Naive thymus-derived CD8-positive, alpha-beta T cell (primary cell): ENCODE measurements at regions of chrX and their contacts with region 1.

Region 1: DNA sequence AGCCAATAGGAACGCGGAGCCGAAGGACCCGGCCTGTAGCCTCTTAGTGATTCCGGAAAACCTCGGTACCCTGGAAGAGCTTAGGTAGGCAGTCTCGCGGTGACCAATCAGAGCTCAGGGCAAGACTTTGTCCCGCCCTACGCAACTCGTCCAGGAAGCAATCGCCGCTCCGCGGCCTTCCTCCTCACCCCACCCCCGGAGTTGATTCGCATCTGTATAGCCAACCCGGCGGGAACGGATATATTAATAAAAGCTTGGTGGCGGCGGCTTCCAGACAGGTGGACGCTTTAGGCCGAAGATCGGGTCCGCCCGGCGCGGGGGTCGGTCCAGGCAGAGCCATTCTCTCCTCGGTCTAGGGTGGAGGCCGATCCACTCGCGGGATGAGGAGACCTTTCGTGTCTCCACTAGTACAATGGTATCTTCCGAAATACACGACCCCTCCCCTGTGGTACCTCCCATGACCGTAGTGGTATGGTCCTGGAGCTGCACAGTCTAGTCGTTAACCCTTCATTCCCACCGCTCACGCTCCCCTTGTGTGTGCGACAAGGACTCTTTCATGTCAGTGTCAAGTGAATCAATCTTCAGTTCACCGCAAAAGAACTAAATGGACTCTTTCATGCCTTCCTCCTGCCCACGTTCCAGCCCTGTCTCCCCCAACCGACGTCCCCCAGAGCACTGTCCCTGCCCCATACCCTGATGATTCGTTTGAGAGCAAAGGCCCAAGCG is 24.2 kb upstream of the GLOD5 start:
- DNase-seq: peak; percentile 63 to 96 (median 85)
- ATAC-seq: peak; percentile 95
- H3K4me3 Mint-ChIP-seq: peak overlapping the region; percentile 81 to 95 (median 92)
- H3K27ac Mint-ChIP-seq: peak overlapping the region; percentile 95 to 99 (median 97)
- H3K4me1 Mint-ChIP-seq: peaks cover 11 to 23% (median 22%) of the 10 kb centered on the region in 4 donors
- H3K27me3 Mint-ChIP-seq: no peaks in the 10 kb centered on the region

Region 2: GRCh38 chrX:48683411-48683982 is 53.9 kb before region 1 on chrX and contains the start of gene WAS:
- POLR2A ChIA-PET with region 1: interaction called, 28 read pairs
- DNase-seq: peak in 9 of 10 donors; percentile 22 to 66 (median 38)
- ATAC-seq: peak; percentile 87 to 88
- H3K4me3 Mint-ChIP-seq: peak within 1 kb of the TSS; percentile 89 to 96 (median 94)
- H3K27ac Mint-ChIP-seq: peak within 1 kb of the TSS; percentile 92 to 97 (median 96)
- H3K4me1 Mint-ChIP-seq: peaks cover 28 to 67% (median 55%) of the 10 kb centered on the region in 4 donors
- H3K27me3 Mint-ChIP-seq: no peaks in the 10 kb centered on the region
- polyA plus RNA-seq, gene WAS: 13.9 to 25.1 (median 19.7) TPM

Region 3: DNA sequence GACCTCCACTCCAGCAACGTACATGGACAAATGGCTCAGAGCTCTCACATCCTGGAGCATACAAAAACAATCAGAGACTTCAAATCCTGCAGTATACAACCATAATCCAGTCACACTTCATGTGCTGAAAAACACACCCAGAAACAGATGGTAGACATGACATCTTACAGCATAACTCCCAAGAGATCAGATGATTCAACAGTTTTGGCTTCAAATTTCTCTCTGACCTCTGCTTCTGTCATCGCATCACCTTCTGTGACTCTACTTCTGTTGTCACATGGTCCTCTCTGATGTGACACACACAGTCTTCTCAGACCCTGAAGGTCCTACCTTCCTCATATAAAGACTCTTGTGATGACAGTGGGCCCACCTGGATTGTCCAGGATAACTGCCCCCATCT is 22.3 kb before region 1 on chrX:
- POLR2A ChIA-PET with region 1: interaction called, 28 read pairs
- DNase-seq: no peak
- ATAC-seq: peak in 1 of 2 donors; percentile 6
- H3K4me3 Mint-ChIP-seq: peak overlapping the region in 8 of 10 donors; percentile 11 to 75 (median 64)
- H3K27ac Mint-ChIP-seq: peak overlapping the region; percentile 78 to 97 (median 90)
- H3K4me1 Mint-ChIP-seq: peaks cover 66 to 86% (median 85%) of the 10 kb centered on the region in 4 donors
- H3K27me3 Mint-ChIP-seq: no peaks in the 10 kb centered on the region

Region 4: GRCh38 chrX:48726596-48726995 is 10.8 kb before region 1 on chrX:
- POLR2A ChIA-PET with region 1: interaction called, 25 read pairs
- DNase-seq: peak in 3 of 10 donors; percentile 14 to 54 (median 39)
- ATAC-seq: peak; percentile 56 to 91
- H3K4me3 Mint-ChIP-seq: peak overlapping the region in 6 of 10 donors; percentile 6 to 71 (median 48)
- H3K27ac Mint-ChIP-seq: peak overlapping the region in 9 of 10 donors; percentile 3 to 86 (median 68)
- H3K4me1 Mint-ChIP-seq: peaks cover 25 to 49% (median 41%) of the 10 kb centered on the region in 4 donors
- H3K27me3 Mint-ChIP-seq: no peaks in the 10 kb centered on the region

Region 5: GRCh38 chrX:48826135-48826875 is 88.9 kb after region 1 on chrX and contains the start of gene ERAS:
- POLR2A ChIA-PET with region 1: interaction called, 12 read pairs
- DNase-seq: peak in 5 of 10 donors; percentile 16 to 27 (median 20)
- ATAC-seq: peak; percentile 74
- H3K4me3 Mint-ChIP-seq: peak within 1 kb of the TSS; percentile 44 to 86 (median 62)
- H3K27ac Mint-ChIP-seq: peak within 1 kb of the TSS in 1 of 10 donors; percentile 71
- H3K4me1 Mint-ChIP-seq: peaks cover 4 to 11% (median 7%) of the 10 kb centered on the region in 4 donors
- H3K27me3 Mint-ChIP-seq: peaks cover 5 to 20% (median 17%) of the 10 kb centered on the region in 5 donors
- polyA plus RNA-seq, gene ERAS: not detected

Region 6: DNA sequence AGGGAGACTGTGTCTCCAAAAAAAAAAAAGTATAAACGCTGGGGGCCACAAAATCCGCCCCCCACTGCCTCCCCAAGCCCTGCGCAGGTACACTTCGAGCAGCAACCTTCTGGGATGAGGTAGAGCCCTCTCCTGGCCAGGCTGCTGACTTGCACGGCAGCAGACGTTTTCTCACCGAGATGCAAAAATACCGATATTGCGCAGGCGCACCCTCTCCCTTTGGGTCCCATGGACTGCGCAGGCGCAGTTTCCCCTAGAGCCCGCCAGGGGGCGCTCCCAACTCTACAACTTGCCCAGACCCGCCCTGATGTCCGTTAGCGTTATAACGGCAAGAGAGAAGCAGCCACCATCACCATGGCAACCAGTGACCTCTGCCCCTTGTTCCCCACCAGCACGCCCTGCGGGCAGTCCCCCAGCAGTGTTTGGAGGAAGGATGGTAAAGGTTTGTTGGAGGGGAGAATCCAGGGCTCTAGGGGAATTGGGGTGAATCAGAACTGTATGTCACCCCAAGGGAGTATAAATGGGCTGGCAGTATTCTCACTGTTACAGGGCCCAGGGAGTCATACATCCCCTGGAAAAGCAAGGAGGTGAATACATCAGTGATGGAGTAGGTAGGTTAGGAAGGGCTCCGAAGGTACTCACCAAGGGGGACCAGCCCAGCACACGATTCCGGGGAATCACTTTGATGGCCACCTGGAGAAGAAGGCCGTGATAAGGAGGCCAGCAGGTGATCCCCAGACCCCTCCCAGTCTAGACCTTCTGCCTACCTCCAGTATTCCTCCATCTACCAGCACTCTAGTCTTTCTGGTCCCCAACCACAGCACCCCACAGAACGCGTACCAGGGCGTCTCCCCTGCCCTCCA is 180.0 kb after region 1 on chrX:
- POLR2A ChIA-PET with region 1: no interaction called
- DNase-seq: peak; percentile 70 to 95 (median 89)
- ATAC-seq: peak; percentile 30 to 34
- H3K4me3 Mint-ChIP-seq: peak overlapping the region; percentile 95 to 99 (median 98)
- H3K27ac Mint-ChIP-seq: peak overlapping the region; percentile 87 to 99 (median 97)
- H3K4me1 Mint-ChIP-seq: peaks cover 14 to 69% (median 49%) of the 10 kb centered on the region in 4 donors
- H3K27me3 Mint-ChIP-seq: peaks cover 0 to 2% (median 0%) of the 10 kb centered on the region in 5 donors